CD4-positive, alpha-beta T cell (primary cell): ENCODE measurements at regions of chr4 and their contacts with region 1.

Region 1: DNA sequence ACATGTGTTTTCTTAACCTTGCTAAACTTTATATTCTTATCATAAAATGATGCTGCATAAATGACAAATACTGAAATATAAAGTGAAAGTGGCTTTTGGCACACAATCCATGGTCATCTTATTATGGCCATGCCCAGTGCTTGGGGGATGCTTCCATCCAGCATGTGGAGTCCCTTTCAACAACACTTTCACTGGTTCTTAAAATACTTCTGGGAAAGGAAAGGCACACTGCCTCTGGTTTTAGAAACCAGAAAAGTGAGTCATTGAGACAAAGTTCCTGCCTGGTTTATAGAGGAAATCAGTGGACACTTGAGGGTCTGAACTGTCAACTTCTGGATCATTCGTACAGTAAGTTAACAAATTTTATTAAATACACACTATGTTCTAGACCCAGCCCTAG is 248.0 kb upstream of the ADAMTS3 start:
- DNase-seq: no peak
- ATAC-seq: no peak
- H3K4me3 ChIP-seq: no peak overlapping the region
- H3K4me3 Mint-ChIP-seq: no peak overlapping the region
- H3K27ac ChIP-seq: no peak overlapping the region
- H3K27ac Mint-ChIP-seq: no peak overlapping the region
- H3K4me1 ChIP-seq: no peaks in the 10 kb centered on the region
- H3K4me1 Mint-ChIP-seq: no peaks in the 10 kb centered on the region
- H3K27me3 ChIP-seq: no peaks in the 10 kb centered on the region
- H3K27me3 Mint-ChIP-seq: no peaks in the 10 kb centered on the region
- CTCF ChIP-seq: no peak

Region 2: GRCh38 chr4:72791054-72791453 is 26.0 kb before region 1 on chr4:
- CTCF ChIA-PET with region 1: no interaction called
- POLR2A ChIA-PET with region 1: no interaction called
- intact Hi-C with region 1: loop called in 1 of 2 experiments (anchors 1 kb)
- DNase-seq: no peak
- ATAC-seq: no peak
- H3K4me3 ChIP-seq: no peak overlapping the region
- H3K4me3 Mint-ChIP-seq: no peak overlapping the region
- H3K27ac ChIP-seq: no peak overlapping the region
- H3K27ac Mint-ChIP-seq: no peak overlapping the region
- H3K4me1 ChIP-seq: no peaks in the 10 kb centered on the region
- H3K4me1 Mint-ChIP-seq: no peaks in the 10 kb centered on the region
- H3K27me3 ChIP-seq: peaks cover 0 to 6% of the 10 kb centered on the region in 2 experiments
- H3K27me3 Mint-ChIP-seq: peaks cover 18% of the 10 kb centered on the region
- CTCF ChIP-seq: no peak

Region 3: GRCh38 chr4:72938516-72938915 is 121.5 kb after region 1 on chr4:
- CTCF ChIA-PET with region 1: no interaction called
- POLR2A ChIA-PET with region 1: no interaction called
- intact Hi-C with region 1: no loop called
- DNase-seq: no peak
- ATAC-seq: no peak
- H3K4me3 ChIP-seq: no peak overlapping the region
- H3K4me3 Mint-ChIP-seq: no peak overlapping the region
- H3K27ac ChIP-seq: no peak overlapping the region
- H3K27ac Mint-ChIP-seq: no peak overlapping the region
- H3K4me1 ChIP-seq: no peaks in the 10 kb centered on the region
- H3K4me1 Mint-ChIP-seq: no peaks in the 10 kb centered on the region
- H3K27me3 ChIP-seq: no peaks in the 10 kb centered on the region
- H3K27me3 Mint-ChIP-seq: peaks cover 20% of the 10 kb centered on the region
- CTCF ChIP-seq: no peak